HAP-1 (cell line): ENCODE measurements at regions of chr1 and their contacts with region 1.

Region 1: DNA sequence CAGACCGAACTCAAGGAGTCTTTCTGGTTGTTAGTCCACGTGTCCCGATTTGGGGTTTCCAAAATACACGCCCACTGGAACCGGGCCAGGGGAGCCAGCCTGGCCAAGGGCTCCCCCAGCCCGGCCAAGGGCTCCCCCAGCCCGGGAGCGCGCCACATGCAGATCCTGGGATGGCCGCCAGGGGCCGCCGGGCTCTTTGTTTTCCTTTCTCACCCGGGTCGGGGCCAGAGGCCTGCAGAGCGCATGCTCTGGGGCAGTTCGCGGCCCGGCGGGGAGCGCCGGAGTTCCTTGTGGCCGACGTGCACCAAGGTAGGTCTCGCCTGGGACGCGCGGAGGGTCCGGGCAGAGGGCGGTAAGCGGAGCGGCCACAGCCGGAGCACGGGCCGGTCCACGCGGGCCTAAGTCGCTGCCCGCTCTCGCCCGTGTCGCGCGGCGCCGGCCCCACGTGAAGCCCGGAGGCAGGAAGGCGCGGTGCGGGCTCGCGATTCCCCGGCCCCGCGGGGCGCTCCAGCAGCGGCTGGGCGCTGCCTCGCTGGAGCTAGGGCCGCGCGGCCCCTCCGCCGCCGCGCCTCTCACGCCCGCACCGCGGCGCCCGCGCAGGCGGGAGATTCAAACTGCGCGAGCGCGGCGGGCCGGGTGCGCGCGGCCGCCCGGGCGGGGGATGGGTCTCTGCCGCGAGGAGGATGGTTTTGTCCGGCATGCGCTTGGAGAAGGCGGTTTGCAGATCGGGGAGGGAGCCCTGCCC is 12.3 kb downstream of the RCC1 start:
- DNase-seq: peak; percentile 82 to 95
- H3K4me3 ChIP-seq: peak overlapping the region; percentile 58
- H3K4me1 ChIP-seq: peaks cover 21% of the 10 kb centered on the region
- H3K27me3 ChIP-seq: no peaks in the 10 kb centered on the region

Region 2: DNA sequence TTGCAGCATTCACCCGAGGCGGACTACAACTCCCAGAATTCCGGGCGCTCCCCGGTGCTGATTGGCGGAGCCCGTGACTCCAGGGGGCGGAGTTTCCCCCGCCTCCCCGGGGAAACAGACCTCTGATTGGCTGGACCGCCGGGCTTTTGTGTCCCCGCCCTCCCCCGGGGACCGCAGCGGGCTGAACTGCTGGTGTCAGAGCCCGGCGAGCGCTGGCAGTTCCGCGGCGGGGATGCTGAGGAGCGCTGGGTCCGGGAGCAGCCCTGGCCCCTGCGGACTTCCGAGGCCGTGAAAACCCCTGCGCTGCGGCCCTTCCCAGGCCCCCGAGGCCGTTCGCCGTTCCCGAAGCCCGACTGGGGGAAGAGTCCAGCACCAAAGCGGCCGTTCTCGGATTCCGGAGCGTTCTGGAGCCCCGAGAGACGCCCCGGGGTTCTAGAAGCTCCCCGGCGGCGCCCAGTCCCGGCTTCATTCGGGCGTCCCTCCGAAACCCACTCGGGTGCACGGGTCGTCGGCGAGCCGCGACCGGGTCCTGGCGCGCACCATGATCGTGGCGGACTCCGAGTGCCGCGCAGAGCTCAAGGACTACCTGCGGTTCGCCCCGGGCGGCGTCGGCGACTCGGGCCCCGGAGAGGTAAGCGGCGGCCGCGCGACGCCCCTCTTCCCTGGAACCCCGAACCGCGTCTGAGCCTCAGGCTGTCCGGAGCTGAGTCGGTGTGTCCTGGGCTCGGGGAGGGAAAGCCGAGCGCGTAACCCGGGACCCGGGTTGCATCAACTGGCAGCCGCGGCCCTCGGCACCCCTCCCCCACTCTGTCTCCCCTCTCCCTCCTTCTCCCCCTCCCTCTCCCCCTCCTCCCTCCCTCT is 258.6 kb before region 1 on chr1 and contains the start of gene SESN2:
- in situ Hi-C with region 1: loop called (anchors 10 kb)
- DNase-seq: peak; percentile 94 to 99
- H3K4me3 ChIP-seq: peak within 1 kb of the TSS; percentile 100
- H3K4me1 ChIP-seq: peaks cover 12% of the 10 kb centered on the region
- H3K27me3 ChIP-seq: no peaks in the 10 kb centered on the region